Breast epithelium (tissue), 4 donors: ENCODE measurements at regions of chr21 and their contacts with region 1.

Region 1: DNA sequence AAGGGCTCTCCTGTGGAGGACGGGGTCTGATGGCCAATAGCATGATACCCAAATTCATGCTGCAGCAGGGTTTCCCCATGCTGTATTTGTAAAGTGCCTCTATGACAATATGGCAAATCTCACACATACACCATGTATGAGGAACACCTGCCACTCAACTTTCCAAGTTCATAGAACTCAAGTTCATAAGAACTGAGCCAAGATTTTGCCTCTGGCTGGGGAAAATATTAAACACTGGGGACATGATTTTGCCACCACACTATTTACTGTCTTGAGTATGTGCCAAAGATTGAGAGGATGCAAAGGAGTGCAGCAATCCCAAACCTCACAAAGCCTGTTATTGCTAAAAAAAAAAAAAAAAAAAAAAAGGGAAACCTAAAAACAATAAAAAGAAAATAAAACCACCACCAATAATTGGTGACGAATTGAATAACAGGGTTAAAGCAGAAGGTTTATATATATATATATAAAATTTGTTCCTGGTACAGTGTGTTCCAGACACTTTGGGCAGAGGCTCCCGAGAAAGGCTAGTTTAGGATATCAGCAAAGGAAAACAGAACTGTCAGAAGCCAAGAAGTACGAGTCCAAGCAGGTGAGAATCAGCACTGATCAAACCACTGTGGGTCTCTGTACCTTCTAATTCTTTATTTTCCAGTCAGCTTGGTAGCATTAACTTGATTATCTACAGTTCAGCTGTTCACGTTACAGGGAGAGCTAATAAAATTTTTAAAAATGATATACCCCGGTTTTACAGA is 24.3 kb downstream of the ZBTB21 start:
- DNase-seq: no peak
- H3K4me3 ChIP-seq: no peak overlapping the region
- H3K27ac ChIP-seq: no peak overlapping the region
- H3K4me1 ChIP-seq: peaks cover 0 to 5% of the 10 kb centered on the region in 2 donors
- H3K27me3 ChIP-seq: no peaks in the 10 kb centered on the region
- CTCF ChIP-seq: no peak
- POLR2A ChIP-seq: no peak

Region 2: DNA sequence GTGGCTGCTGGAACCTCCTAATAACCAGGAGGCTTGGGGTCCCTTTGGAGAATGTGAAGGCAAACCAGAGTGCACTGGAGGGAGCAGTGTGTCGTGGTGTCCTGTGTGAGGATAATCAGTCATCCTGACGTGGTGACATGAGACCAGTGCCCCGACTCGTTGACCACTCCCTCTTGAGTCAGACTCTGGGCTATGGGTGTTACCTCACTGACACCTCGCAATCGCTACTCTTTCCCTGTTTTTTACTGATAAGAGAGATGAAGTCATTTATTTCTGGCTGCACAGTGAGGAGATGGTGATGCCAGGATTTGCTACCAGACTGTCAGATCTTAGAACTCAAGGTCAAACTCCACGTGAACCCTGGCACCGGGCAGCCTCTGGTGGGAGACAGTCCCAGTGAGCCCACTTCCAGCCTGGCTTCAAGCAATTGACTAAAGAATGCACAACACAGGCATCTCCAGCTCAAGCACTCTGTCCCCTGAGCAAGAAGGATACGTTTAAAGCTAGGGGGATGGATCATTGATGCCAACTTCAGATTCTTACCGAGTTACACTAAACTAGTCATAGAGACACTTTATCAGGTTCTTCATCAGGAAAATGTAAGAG is 448.2 kb after region 1 on chr21:
- intact Hi-C with region 1: loop called (anchors 5 kb)
- DNase-seq: no peak
- H3K4me3 ChIP-seq: no peak overlapping the region
- H3K27ac ChIP-seq: no peak overlapping the region
- H3K4me1 ChIP-seq: no peaks in the 10 kb centered on the region
- H3K27me3 ChIP-seq: peaks cover 3 to 6% of the 10 kb centered on the region in 2 donors
- CTCF ChIP-seq: no peak
- POLR2A ChIP-seq: no peak